MCF 10A (cell line): ENCODE measurements at regions of chr1 and their contacts with region 1.

Region 1: GRCh38 chr1:94237291-94238226 is at the start of gene ARHGAP29:
- DNase-seq: peak; percentile 80
- H3K4me3 Mint-ChIP-seq: peak within 1 kb of the TSS; percentile 95
- H3K27ac Mint-ChIP-seq: peak within 1 kb of the TSS; percentile 90
- H3K4me1 Mint-ChIP-seq: peaks cover 39% of the 10 kb centered on the region
- H3K27me3 Mint-ChIP-seq: no peaks in the 10 kb centered on the region
- CTCF ChIP-seq: no peak
- total RNA-seq, gene ARHGAP29: 38.6 and 46.7 TPM in 2 replicates

Region 2: GRCh38 chr1:94039514-94039870 is 198.1 kb before region 1 on chr1:
- CTCF ChIA-PET with region 1: interaction called, 16 read pairs
- POLR2A ChIA-PET with region 1: interaction called, 4 read pairs
- intact Hi-C with region 1: loop called (anchors 2 kb)
- DNase-seq: peak; percentile 80
- H3K4me3 Mint-ChIP-seq: no peak overlapping the region
- H3K27ac Mint-ChIP-seq: no peak overlapping the region
- H3K4me1 Mint-ChIP-seq: peaks cover 19% of the 10 kb centered on the region
- H3K27me3 Mint-ChIP-seq: no peaks in the 10 kb centered on the region
- CTCF ChIP-seq: peak; percentile 89

Region 3: GRCh38 chr1:94061513-94062443 is 175.8 kb before region 1 on chr1:
- CTCF ChIA-PET with region 1: interaction called, 36 read pairs
- POLR2A ChIA-PET with region 1: interaction called, 5 read pairs
- intact Hi-C with region 1: loop called (anchors 1 kb)
- DNase-seq: peak; percentile 76
- H3K4me3 Mint-ChIP-seq: no peak overlapping the region
- H3K27ac Mint-ChIP-seq: no peak overlapping the region
- H3K4me1 Mint-ChIP-seq: peaks cover 5% of the 10 kb centered on the region
- H3K27me3 Mint-ChIP-seq: no peaks in the 10 kb centered on the region
- CTCF ChIP-seq: peak; percentile 87

Region 4: DNA sequence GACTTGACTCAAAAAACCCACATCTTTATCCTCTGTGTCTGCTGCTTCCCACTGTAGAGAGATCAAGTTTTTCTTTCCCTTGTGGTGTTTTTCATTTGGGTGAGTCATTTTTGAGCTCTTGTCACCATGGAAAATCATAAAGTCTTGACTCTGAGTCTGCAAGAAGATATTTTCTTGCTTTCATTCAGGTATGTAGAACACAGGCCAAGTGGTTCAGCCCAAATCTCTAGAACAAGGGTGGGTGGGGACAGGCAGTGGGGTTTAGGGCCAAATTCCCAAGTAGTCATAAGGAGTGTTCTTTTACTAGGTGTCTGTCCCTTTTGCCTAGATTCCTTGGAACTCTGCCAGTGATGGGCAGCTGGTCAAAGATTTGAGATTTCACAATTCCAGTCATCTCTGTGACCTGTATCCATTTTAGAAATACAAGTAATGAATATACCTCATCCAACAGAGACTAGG is 21.3 kb after region 1 on chr1:
- CTCF ChIA-PET with region 1: interaction called, 3 read pairs
- POLR2A ChIA-PET with region 1: interaction called, 34 read pairs
- intact Hi-C with region 1: loop called (anchors 2 kb)
- DNase-seq: peak; percentile 89
- H3K4me3 Mint-ChIP-seq: peak overlapping the region; percentile 50
- H3K27ac Mint-ChIP-seq: peak overlapping the region; percentile 99
- H3K4me1 Mint-ChIP-seq: peaks cover 46% of the 10 kb centered on the region
- H3K27me3 Mint-ChIP-seq: no peaks in the 10 kb centered on the region
- CTCF ChIP-seq: no peak

Region 5: DNA sequence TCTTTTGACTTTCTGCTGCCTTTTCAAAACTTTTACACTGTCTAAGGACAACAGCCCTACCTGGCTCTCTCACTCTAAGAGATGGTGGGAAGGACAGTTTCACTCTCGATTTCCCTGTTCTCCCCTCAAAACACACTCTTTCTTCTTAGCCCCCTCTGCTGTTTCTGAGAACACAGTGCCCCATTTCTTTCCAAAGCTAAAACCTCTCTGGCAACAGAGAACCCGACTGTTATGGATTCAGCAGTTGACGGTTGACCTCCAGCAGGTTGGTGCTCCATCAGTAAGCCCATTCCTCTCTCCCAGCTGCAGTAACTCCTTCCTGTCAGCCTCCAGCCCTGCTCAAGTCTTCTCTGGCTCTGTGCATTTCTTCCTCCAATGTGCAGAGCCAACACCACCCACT is 92.4 kb after region 1 on chr1:
- CTCF ChIA-PET with region 1: interaction called, 63 read pairs
- POLR2A ChIA-PET with region 1: interaction called, 62 read pairs
- intact Hi-C with region 1: loop called (anchors 1 kb)
- DNase-seq: peak; percentile 56
- H3K4me3 Mint-ChIP-seq: no peak overlapping the region
- H3K27ac Mint-ChIP-seq: no peak overlapping the region
- H3K4me1 Mint-ChIP-seq: peaks cover 30% of the 10 kb centered on the region
- H3K27me3 Mint-ChIP-seq: no peaks in the 10 kb centered on the region
- CTCF ChIP-seq: peak; percentile 38